Activated B cell treated with CpG ODN at 0.5 μM for 24 hours (primary cell): ENCODE measurements at regions of chr22 and their contacts with region 1.

Region 1: DNA sequence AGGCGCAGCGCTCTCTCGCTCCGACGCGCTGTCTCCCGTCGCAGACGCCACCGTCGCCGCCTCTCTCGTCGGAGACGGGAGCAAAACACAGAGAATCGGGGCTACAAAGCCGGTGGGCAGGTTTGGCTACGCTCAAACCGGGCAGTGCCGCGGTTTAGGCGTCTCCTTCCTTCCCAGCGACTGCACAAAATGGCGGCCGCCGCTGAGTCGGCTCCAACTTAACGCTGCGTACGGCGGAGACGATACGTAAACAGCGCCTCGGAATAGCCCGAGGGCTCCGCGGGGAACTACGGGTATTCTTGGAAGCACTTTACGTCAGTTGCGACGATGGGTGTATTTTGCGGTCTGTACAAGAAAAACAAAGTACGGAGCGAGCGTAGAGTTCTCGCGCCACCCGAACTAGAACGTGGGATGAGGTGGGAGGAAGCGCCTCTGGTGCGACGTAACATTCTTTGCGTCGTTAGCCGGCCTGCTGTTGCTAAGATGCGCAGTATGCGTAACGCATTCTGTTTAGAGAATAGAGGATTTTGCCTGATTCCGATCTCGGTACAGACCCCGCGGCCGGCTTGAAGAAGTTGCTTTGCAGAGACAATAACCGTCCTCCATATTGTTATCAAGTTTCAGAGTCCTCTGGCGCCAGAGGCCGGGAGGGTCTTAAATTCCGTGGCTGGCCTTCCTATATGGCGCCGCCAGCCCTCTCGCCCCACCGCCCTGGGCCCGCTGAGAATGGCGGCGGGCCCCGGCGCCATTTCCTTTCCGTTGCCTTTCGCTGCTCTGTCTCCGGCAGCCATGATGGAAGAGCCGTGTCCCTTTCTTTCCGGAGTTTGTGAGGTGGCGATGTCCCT is at the start of gene DDX17:
- DNase-seq: peak; percentile 91
- ATAC-seq: peak; percentile 89
- H3K4me3 Mint-ChIP-seq: peak within 1 kb of the TSS; percentile 99
- H3K27ac Mint-ChIP-seq: peak within 1 kb of the TSS; percentile 100
- H3K4me1 Mint-ChIP-seq: peaks cover 41% of the 10 kb centered on the region
- H3K27me3 Mint-ChIP-seq: no peaks in the 10 kb centered on the region
- CTCF ChIP-seq: no peak
- total RNA-seq, gene DDX17: 533 and 612 TPM in 2 replicates

Region 2: DNA sequence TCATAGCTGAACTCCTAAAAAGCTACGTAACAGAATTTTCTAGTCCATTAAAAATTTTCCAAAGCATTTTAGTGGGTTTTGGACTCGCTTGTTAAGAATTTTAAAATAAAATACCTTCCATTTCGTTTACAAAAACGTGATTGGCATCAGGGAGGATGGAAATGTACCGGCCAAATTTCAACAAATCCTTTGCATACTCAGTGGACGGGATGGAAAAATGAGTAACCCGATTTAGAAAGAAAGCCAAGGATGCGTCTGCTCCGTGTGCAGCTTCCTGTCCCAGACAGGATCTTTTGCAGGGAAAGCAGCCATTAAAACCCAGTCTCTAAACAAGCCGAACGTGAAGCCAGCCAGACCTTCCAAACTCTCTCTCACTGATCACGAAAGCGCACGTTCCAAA is 249.2 kb before region 1 on chr22:
- CTCF ChIA-PET with region 1: no interaction called
- POLR2A ChIA-PET with region 1: interaction called, 13 read pairs
- intact Hi-C with region 1: no loop called
- DNase-seq: no peak
- ATAC-seq: no peak
- H3K4me3 Mint-ChIP-seq: no peak overlapping the region
- H3K27ac Mint-ChIP-seq: no peak overlapping the region
- H3K4me1 Mint-ChIP-seq: peaks cover 32% of the 10 kb centered on the region
- H3K27me3 Mint-ChIP-seq: no peaks in the 10 kb centered on the region
- CTCF ChIP-seq: no peak

Region 3: DNA sequence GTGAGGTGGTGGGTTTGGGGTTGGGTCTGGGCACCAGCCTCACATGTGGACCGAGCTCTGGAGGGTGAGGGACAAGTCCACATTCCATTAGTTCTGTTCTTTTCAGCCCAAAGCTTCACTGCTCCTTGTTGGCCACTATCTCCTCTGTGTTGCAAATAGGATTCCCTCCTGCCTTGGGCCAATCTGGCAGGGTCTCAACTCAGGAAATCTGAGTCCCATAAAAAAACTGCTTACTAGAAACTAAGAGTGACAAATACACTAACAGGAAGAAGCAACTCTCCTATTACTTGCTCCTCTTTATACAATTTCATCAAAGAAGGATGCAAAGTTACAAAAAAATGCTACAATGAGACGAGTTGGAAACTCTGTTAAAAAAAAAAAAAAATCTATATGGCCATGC is 122.9 kb before region 1 on chr22:
- CTCF ChIA-PET with region 1: no interaction called
- POLR2A ChIA-PET with region 1: no interaction called
- intact Hi-C with region 1: no loop called
- DNase-seq: no peak
- ATAC-seq: no peak
- H3K4me3 Mint-ChIP-seq: no peak overlapping the region
- H3K27ac Mint-ChIP-seq: peak overlapping the region; percentile 53
- H3K4me1 Mint-ChIP-seq: peaks cover 58% of the 10 kb centered on the region
- H3K27me3 Mint-ChIP-seq: no peaks in the 10 kb centered on the region
- CTCF ChIP-seq: no peak

Region 4: DNA sequence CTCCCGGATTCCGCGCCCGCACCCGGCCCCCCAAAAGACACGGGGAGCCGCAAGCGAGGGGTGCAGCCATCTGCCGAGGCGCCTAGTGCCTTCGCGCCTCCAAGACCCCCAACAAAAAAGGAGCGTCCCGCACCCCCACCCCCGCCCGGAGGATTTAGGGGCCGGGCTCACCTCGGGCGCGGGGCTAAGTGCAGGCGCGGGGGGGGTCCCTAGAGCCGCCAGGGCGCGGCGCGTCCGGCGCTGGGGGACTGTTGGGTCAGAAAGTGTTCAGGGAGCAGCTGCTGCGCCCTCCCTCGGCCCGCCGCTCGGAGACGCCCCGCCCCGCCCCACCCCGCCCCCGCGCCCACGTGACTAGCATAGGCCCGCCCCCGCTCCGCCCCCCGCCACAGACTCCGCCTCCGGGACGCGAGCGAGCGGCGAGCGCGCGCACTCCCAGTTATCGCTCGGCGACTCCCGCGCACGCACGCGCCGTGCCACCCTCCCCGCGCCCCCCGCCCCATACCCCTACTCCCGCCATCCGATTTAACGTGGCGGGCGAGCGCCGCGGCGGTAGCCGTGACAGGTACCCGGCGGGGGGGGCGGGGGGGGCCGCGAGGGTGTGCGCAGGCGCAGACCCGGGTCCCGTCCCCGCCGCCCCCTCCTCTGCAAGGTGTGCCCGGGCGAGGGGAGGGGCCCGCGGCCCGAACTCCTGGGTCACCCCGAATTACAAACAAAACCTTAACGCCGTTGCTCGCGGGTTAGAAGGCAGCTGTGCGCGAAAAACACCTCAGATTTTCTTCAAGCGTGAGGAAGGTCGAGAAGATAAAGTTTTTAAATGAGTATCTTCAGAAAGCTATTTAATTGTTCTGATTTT is 107.5 kb before region 1 on chr22:
- CTCF ChIA-PET with region 1: no interaction called
- POLR2A ChIA-PET with region 1: no interaction called
- intact Hi-C with region 1: loop called (anchors 1 kb)
- DNase-seq: peak; percentile 79
- ATAC-seq: peak; percentile 73
- H3K4me3 Mint-ChIP-seq: peak overlapping the region; percentile 82
- H3K27ac Mint-ChIP-seq: peak overlapping the region; percentile 84
- H3K4me1 Mint-ChIP-seq: peaks cover 37% of the 10 kb centered on the region
- H3K27me3 Mint-ChIP-seq: no peaks in the 10 kb centered on the region
- CTCF ChIP-seq: no peak

Region 5: DNA sequence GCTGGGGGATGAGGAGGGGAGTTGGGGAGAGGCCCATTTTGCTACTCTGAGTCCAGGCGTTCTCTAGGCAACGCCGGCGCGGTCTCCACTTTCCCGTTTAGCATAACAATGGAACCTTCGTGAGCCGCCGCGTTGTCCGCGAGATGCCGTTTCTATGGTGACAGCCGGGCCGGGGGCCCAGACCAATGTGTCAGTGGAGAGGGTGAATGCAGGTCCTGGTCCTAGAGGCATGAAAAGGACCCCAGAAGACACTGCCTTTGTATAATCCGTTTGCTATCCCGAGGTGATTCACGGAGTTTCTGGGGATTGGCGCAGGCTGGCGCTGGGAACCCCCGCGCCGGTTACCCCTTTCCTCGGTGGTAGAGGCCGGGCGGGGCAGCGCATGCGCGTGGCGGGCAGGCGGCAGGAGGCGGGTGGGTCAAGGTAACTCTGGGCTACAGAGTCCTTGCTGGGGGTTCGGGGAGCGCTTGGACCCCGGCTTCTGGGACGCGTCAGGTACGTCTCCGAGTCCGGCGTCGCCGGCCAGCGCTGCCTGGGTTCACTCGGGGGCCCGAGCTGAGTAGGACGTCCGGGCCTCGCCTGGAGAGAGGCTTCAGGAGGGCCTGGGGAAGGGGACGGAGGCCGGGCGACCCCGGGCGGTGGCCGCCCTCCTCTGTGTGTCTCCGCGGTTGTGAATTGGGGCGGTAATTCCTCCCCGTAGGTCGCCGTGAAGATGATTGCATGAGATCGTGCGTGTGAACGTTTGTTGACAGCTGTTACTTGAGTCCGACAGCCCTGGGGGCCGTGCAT is 150.1 kb after region 1 on chr22 and contains the starts of genes CBY1 and FAM227A:
- CTCF ChIA-PET with region 1: no interaction called
- POLR2A ChIA-PET with region 1: interaction called, 3 read pairs
- intact Hi-C with region 1: loop called (anchors 1 kb)
- DNase-seq: peak; percentile 91
- ATAC-seq: peak; percentile 84
- H3K4me3 Mint-ChIP-seq: peak within 1 kb of the TSS; percentile 94
- H3K27ac Mint-ChIP-seq: peak within 1 kb of the TSS; percentile 99
- H3K4me1 Mint-ChIP-seq: peaks cover 10% of the 10 kb centered on the region
- H3K27me3 Mint-ChIP-seq: no peaks in the 10 kb centered on the region
- CTCF ChIP-seq: no peak
- total RNA-seq, gene CBY1: 7.3 and 14.1 TPM in 2 replicates
- total RNA-seq, gene FAM227A: 0.20 and 0.66 TPM in 2 replicates